Activated T-helper 1 cell treated with anti-CD3 and anti-CD28 coated beads, Interleukin-12 subunit alpha, Interleukin-12 subunit beta, Interleukin-2, Interleukin-4 antibody, amounts not matched to agents 30 ng/mL and 10 ng/mL and 1 ng/mL, durations not matched to agents 14 hours and 24 hours and 36 hours (primary cell): ENCODE measurements at regions of chr1 and their contacts with region 1.

Region 1: DNA sequence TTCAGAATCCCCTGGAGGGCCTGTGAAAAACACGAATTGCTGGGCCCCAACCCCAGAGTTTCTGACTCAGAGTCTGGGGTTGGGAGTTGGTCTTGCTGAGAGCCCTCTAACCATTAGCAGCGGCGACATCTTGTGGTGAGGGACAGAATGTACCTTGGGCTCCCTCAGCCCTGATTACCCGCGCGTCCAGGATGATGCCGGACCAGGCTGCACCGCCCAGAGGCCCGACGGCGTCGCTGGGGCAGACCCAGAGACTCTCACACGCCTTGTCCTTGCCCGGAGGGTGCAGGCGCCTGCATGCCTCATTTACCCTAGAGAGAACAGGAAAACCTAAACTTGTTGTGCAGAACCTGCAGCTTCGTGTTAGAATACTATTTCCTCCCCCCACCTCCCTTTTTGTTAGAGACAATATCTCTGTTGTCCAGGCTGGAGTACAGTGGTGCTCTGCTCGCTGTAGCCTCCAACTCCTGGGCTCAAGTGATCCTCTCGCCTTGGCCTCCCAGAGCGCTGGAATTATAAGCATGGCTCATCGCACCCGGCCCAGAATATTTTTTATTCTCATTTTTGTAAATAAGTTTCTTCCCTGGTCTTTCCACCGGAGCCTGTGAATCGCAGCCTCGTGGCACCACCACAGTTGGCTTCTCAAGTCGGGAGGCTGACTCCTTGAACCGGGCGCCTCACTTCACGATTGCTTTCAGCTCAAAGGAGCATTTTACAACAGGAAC is 22.2 kb upstream of the RD3 start:
- DNase-seq: peak; percentile 58
- H3K4me3 Mint-ChIP-seq: peak overlapping the region; percentile 66
- H3K27ac Mint-ChIP-seq: peak overlapping the region; percentile 55
- H3K4me1 Mint-ChIP-seq: peaks cover 27% of the 10 kb centered on the region
- H3K27me3 Mint-ChIP-seq: peaks cover 13% of the 10 kb centered on the region

Region 2: DNA sequence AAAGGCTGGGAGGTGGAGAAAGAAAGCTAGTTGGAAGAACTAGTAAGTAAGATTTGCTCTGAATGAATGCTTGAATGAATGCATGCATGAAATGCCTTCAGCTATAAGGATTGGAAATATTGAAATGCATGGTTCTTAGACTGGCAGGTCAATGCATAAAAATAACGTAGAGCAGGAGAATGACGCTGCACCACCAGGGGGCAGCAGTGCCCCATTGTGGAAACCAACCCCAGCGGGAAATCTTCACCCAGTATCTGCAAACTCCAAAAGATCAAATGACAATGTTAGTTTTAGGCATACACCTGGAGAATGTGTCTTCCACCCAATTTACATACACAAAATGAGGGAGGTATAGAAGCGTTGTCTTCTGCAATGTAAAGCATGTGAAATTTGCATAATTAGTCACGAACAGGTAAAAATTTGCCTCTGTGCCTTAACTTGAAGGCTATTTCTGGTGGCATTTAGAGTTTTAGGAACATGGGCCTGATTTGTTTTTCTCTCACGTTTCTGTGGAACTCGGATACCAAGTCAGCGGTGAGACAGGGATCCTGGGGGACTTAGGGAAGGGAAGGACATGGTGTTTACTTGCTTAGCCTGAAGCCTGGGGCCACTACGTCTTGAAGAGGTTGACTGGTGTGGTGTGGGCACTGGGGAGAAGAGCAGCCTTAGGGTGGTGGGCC is 1106.8 kb before region 1 on chr1:
- intact Hi-C with region 1: loop called (anchors 1 kb)
- DNase-seq: peak; percentile 49
- H3K4me3 Mint-ChIP-seq: no peak overlapping the region
- H3K27ac Mint-ChIP-seq: no peak overlapping the region
- H3K4me1 Mint-ChIP-seq: no peaks in the 10 kb centered on the region
- H3K27me3 Mint-ChIP-seq: peaks cover 6% of the 10 kb centered on the region

Region 3: DNA sequence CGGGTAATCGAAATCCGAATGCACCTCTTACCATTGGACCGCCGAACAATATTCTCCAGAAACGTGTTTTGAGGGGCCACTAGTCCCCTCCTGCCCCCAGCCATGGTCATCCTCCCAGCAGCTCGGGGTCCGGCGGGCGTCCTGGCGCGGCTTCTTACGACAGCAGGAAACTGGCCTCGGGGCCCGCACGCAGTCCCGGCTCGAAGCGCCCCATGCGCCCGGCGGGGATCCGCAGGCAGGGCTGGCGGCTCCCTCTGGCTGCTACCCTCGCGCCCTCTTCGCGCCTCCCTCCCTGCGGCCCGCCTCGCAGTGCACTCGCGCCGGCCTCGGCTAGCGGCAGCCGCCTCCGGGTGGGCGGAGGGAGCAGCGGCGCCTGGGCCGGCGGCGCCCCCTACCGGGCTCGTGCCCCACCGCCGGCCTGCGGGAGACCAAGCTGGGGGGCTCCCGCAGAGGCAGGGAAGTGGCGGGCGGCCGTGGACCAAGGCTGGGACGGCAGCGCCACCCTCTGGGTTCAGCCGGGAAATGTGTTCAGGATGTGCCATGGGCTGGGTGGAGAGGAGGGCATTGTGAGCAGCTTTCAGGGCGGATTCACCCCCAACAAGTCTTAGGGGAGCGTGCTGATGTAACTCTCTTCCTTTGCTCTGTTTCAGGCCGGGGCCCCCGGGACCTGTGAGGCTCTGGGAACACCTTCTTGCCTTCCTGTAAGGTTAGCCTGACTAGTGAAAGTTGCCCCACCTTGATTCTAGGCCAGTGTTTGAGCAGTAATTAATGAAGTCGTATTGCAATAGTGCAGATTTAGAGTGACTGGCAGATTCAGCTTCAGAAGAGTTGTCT is 380.1 kb before region 1 on chr1 and contains the start of gene KCNH1:
- intact Hi-C with region 1: loop called (anchors 1 kb)
- DNase-seq: peak; percentile 54
- H3K4me3 Mint-ChIP-seq: peak within 1 kb of the TSS; percentile 50
- H3K27ac Mint-ChIP-seq: no peak within 1 kb of the TSS
- H3K4me1 Mint-ChIP-seq: no peaks in the 10 kb centered on the region
- H3K27me3 Mint-ChIP-seq: peaks cover 70% of the 10 kb centered on the region
- total RNA-seq, gene KCNH1: not detected in 2 replicates

Region 4: DNA sequence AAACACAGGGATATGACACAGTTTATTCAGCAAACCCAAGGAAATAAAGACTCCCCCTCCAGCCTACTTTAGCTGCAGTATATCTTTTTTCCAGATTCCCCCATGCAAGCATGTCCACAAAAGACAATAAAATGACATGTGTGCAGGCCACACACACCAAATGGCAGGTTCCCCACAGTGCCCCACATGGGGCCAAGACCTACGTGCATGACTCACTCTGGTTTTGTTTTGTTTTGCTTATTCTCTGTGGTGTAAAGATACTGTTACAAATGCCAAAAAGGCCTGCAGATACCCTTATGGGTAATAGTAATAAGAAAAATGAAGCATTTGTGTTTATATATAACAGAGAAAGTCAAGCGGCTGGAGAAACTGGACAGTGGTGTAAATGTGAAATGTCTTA is 93.8 kb before region 1 on chr1:
- intact Hi-C with region 1: loop called (anchors 2 kb)
- DNase-seq: peak; percentile 5
- H3K4me3 Mint-ChIP-seq: no peak overlapping the region
- H3K27ac Mint-ChIP-seq: peak overlapping the region; percentile 6
- H3K4me1 Mint-ChIP-seq: peaks cover 28% of the 10 kb centered on the region
- H3K27me3 Mint-ChIP-seq: peaks cover under 1% of the 10 kb centered on the region

Region 5: GRCh38 chr1:211654838-211655787 is 140.9 kb after region 1 on chr1:
- intact Hi-C with region 1: loop called (anchors 1 kb)
- DNase-seq: peak; percentile 63
- H3K4me3 Mint-ChIP-seq: no peak overlapping the region
- H3K27ac Mint-ChIP-seq: no peak overlapping the region
- H3K4me1 Mint-ChIP-seq: peaks cover 6% of the 10 kb centered on the region
- H3K27me3 Mint-ChIP-seq: peaks cover 3% of the 10 kb centered on the region